ENCODE measurements at regions of chr2 and their contacts with region 1.

Region 1: GRCh38 chr2:62410015-62410453 is 96.0 kb downstream of the TMEM17 start:
- DNase-seq: peak in 7 of 10 donors; percentile 27 to 89 (median 52)

Region 2: GRCh38 chr2:61922714-61923113 is 487.3 kb before region 1 on chr2:
- intact Hi-C with region 1: loop called (anchors 1 kb)
- DNase-seq: no peak

Region 3: GRCh38 chr2:61993444-61994024 is 416.5 kb before region 1 on chr2:
- intact Hi-C with region 1: loop called (anchors 1 kb)
- DNase-seq: peak in 2 of 10 donors; percentile 11 to 59